Posterior vena cava (tissue), 2 donors: ENCODE measurements at regions of chr6 and their contacts with region 1.

Region 1: GRCh38 chr6:80126657-80127345 is 20.3 kb downstream of the BCKDHB start:
- DNase-seq: no peak

Region 2: GRCh38 chr6:78611958-78612357 is 1514.8 kb before region 1 on chr6:
- intact Hi-C with region 1: loop called in 1 of 2 experiments (anchors 10 kb)
- DNase-seq: no peak

Region 3: GRCh38 chr6:78770766-78771165 is 1356.0 kb before region 1 on chr6:
- intact Hi-C with region 1: no loop called
- DNase-seq: no peak